ENCODE measurements at regions of chr15 and their contacts with region 1.

Region 1: DNA sequence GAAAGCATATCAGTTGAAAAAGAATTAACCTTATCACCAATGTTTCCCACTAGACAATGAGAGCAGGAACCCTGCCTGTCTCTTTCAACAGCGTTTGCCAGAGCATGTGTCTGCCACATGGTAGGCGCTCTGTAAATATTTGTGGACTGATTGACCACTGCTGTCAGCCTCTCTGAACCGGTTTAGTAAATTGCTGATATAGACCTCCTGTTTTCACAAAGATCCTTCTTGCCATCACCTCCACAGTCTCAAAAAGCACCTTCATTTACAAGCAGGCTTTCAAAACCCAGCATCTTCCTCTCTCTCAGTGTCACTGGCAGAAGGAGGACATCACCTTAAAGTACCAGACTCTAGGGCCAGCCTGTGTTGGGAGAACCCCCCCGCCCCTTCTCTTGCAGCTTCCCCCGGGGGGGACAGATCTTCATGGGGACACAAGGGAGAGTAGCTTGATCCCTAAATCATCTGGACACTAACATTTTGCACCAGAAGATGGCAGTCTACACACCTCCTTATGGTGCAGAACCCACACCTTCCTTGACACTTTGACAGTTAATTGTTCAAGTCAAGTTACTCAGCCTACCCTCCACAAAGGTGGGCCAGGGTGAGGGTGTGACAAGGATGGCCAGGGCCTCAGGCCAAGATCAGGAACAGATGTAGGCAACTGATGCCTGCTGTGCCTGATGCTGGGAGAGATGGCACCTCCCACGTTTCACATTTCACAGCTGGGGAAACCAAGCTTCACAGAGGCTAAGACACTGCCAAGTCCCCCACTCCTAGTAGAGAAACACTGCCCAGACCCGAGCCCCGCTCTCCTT is 37.8 kb upstream of the USP3 start:
- DNase-seq: peak; percentile 82
- CTCF ChIP-seq: peak; percentile 76

Region 2: DNA sequence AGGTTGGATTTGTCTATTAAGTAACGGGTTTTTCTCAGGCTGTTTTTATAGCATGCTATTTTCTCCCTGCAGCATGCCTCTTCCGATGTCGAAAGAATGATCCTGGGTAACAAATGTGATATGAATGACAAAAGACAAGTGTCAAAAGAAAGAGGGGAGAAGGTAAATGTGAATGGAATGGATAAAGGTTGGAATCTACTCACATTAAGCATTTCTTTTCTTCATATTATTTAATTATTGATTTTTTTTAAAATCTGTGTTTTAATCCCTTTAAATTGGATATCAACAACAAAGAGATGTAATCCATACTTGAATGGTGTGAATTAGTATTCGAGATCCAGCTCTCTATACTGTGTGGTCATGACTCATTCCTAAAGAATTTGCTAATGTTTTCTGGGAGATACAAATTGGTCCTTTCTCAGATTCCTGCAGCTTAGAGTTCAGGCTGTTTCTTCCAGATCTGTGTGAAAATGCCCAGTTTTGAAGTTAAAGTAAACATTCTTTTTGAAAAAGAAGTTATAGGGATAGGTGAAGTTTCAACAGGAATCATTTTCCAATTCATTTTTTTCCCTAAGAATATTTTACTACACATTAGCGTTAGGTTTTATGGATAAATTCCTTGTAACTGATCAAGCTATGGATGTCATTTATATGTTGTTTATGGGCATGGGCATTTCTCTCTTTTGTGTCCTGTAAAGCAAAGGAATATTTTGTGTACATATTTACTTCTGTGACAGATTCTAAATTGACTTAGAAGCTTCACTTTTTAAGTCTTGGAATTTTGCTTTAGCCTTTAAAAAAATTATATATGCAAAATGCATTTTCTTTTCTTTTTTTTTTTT is 209.9 kb before region 1 on chr15:
- CTCF ChIA-PET with region 1: no interaction called
- POLR2A ChIA-PET with region 1: no interaction called
- DNase-seq: no peak
- CTCF ChIP-seq: no peak

Region 3: GRCh38 chr15:63332367-63333124 is 134.0 kb before region 1 on chr15:
- CTCF ChIA-PET with region 1: no interaction called
- POLR2A ChIA-PET with region 1: no interaction called
- DNase-seq: no peak
- CTCF ChIP-seq: no peak

Region 4: GRCh38 chr15:63487076-63487757 is 20.6 kb after region 1 on chr15:
- CTCF ChIA-PET with region 1: interaction called, 18 read pairs
- POLR2A ChIA-PET with region 1: no interaction called
- DNase-seq: peak; percentile 81
- CTCF ChIP-seq: peak; percentile 85

Region 5: DNA sequence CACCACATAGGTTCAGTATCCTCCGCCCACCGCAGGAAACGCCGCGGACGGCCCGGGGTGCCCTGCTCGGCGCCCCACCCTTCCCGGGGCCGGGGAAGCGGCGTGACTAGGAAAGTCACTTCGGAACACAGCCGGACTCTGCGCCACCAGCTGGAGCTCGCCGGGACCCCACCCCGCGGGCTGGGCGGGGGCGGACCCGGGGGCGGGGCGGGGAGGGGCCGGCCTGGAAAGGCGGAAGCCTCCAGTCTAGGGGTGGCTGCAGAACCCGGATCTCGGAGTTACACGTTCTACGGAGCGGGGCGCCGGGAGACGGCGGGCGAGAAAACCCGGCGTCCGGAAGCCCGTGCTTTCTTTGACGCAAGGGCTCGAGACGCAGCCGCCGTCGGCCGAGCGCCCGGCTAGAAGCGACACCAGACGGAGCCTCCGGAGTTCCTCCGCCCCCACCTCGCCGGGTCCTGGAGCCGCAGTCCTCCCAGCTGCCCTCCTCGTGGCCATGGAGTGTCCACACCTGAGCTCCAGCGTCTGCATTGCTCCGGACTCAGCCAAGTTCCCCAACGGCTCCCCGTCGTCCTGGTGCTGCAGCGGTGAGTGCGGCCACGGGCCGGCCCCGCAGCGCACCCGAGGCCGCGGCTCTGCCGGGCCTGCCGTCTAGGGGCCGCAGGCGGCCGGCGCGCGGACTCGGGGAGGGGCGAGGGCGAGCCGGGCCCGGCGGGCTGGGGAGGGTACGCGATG is 37.8 kb after region 1 on chr15 and contains the start of gene USP3:
- CTCF ChIA-PET with region 1: interaction called, 18 read pairs
- POLR2A ChIA-PET with region 1: no interaction called
- DNase-seq: peak; percentile 91
- CTCF ChIP-seq: peak; percentile 20

Region 6: DNA sequence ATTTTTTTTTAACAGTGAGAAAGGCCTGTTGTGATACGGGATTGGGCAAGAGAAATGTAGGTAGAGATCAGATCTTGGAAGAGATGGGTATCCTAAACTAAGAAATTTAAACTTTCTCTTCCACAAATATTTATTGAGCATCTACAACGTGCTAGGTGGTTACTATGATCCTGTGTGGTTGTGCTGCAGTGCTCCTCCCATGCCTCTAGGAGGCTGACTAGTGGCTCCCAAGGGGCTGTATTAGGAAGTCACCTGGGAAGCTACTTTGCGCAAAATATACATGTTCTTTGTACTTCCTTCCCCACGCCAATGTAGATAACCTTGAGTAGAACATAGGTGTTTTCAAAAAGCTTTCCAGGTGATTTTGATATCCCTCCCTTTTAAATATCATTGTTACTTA is 65.0 kb after region 1 on chr15:
- CTCF ChIA-PET with region 1: interaction called, 12 read pairs
- POLR2A ChIA-PET with region 1: no interaction called
- DNase-seq: no peak
- CTCF ChIP-seq: no peak

Region 7: DNA sequence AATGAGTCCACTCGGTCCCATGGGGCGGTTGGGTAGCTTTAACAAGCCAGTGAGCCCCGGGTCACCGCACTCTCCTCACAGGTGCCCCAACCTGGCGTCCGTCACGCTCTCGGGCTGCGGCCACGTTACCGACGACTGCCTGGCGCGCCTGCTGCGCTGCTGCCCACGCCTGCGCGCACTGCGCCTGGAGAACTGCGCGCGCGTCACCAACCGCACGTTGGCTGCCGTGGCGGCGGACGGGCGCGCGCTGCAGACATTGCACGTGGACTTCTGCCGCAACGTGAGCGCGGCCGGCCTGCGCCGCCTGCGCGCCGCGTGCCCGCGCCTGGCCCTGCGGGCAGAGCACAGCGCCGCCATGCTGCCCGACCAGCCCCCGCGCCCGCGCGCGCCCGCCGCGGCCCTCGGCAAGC is 134.0 kb after region 1 on chr15:
- CTCF ChIA-PET with region 1: interaction called, 38 read pairs
- POLR2A ChIA-PET with region 1: no interaction called
- DNase-seq: peak; percentile 91
- CTCF ChIP-seq: peak; percentile 37